ENCODE measurements at regions of chr4 and their contacts with region 1.

Region 1: DNA sequence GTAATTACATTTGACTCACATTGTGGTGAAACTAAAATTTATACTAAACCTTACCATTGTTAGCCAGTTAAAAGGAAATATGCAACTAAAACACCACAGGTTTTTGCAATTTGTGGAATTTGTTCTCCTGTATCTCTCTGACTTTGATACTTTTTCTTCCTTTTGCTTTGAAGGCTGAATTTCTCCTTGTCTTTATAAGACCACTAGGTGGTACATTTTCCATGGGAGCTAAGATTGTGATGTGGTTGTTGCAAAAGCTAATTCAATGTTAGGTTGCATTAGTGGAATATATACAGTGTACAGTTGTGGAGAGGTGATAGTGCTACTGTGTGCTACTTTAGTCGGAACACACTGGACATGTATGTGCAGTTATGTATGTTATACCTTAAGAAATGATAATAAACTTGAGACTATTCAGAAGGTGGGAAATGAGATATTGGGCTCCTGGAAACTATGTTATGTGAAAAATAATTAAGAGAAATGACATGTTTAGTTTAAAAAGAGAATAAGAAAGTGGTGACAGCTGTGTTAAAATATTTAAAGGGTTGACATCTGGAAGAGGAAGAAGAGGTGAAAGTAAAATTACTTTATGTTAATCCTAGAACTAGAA is 70.3 kb downstream of the ARL9 start:
- DNase-seq: no peak
- H3K4me3 ChIP-seq: no peak overlapping the region
- H3K27ac ChIP-seq: no peak overlapping the region
- H3K4me1 ChIP-seq: no peaks in the 10 kb centered on the region
- H3K27me3 ChIP-seq: no peaks in the 10 kb centered on the region
- CTCF ChIP-seq: peak in 4 of 6 experiments; percentile 43 to 66 (median 58)
- POLR2A ChIP-seq: no peak

Region 2: GRCh38 chr4:56799824-56800756 is 224.2 kb after region 1 on chr4:
- intact Hi-C with region 1: loop called (anchors 10 kb)
- DNase-seq: peak; percentile 19
- H3K4me3 ChIP-seq: peak overlapping the region; percentile 46 to 67 (median 64)
- H3K27ac ChIP-seq: peak overlapping the region; percentile 63 to 84 (median 74)
- H3K4me1 ChIP-seq: peaks cover 0 to 16% (median 3%) of the 10 kb centered on the region in 3 donors
- H3K27me3 ChIP-seq: no peaks in the 10 kb centered on the region
- CTCF ChIP-seq: peak; percentile 78 to 94 (median 90)
- POLR2A ChIP-seq: no peak

Measured in esophagus squamous epithelium (tissue), 5 donors.